Right ventricle myocardium inferior (tissue), 1 donor: ENCODE measurements at regions of chr10 and their contacts with region 1.

Region 1: DNA sequence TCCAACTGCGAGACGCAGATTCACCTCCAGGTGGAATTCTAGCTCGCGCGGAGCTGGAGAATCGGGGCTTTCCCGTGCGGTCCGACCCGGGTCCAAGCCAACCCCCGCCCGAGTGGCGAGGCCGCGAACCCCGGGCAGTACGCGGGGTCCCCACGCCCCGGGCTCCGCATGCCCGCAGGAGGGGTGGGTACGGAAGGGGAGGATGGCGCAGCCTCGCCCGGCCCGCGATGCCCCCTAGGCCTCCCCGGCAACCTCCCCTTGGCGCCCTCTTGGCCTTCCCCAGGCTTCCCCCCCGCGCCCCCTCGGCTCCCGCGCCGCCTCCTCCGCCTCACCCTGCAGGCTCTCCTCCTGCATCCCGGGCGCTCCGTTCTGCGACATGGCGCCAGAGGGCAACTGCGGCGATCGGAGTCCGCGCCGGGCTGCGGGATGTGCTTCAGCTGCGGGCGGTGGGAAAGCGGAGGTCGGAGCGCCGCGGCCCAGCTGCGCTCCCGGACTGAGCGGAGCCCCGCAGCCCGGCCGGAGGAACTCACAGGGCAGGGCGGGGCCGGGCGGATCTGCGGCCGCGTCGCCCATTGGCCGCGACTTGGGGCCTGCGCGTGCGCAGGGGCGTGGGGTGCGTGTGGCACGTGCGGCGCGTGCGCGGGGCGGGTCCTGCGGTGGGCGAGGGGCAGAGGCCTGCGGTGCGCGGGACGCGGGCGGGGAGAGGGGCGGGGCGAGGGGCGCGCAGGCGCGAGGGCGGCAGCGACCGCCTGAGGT is at the start of gene BNIP3:
- DNase-seq: peak; percentile 96
- ATAC-seq: peak; percentile 96
- total RNA-seq, gene BNIP3: 157 TPM

Region 2: DNA sequence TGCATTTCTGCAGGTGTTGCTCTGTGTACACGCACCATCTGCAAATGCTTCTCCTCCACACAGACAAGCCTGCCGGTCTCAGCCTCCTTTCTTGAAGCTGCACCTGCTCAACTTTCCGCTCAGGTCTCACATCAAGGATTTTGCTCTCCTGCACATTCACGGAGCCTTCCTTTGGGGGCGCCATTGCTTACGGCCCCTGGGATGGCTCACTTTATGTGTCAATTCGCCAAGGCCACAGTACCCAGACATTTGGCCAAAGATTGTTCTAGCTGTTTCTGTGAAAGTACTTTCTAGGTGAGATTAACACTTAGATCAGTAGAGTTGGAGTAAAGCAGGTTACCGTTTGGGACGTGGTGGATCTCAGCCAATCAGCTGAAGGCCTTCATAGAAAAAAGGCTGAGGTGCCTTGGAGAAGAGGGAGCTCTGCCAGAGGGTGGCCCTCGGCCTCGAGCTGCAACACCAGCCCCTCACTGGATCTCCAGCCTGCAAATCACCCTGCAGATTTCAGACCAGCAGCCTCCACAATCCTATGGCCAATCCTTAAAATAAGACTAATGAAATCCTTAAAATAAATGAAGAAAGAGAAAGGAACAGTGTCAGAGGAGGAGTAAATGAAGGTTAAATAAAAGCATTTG is 120.7 kb before region 1 on chr10:
- intact Hi-C with region 1: no loop called
- DNase-seq: no peak
- ATAC-seq: no peak

Region 3: GRCh38 chr10:131900350-131901146 is 81.1 kb before region 1 on chr10 and contains the start of gene PPP2R2D:
- intact Hi-C with region 1: loop called (anchors 5 kb)
- DNase-seq: peak; percentile 96
- ATAC-seq: peak; percentile 97
- total RNA-seq, gene PPP2R2D: 36.6 TPM

Region 4: DNA sequence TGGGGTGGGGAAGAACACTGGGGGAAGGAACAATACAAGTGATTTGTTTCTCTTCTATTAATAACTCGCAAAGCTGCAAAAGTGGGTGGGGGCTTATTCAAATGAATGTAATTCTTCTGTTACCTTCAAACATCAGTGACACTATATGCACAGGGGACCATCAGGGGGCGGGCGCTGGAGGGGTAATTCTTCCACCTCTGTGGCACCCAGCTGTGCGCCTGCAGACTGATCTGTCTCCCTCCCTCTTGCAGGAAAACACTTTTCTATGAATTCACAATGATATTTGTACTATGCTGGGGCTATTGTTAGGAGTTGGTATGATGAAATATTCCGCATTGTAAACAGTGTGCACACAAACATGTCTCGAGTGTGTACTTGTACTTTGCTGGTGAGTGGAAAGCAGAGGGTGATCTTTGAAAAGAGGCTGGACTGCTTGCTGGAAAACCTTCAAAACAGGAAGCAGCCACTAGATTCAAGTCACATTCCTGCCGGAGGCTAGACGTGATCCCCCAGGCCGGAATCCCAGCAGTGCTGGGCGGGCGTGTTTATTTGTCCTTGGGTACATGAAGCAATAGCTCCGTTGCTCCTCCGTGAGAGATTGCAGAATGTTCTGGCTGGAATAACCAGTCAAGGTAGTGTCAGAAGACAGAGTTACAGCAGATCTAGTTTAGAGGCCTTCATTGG is 15.9 kb after region 1 on chr10:
- intact Hi-C with region 1: loop called (anchors 1 kb)
- DNase-seq: no peak
- ATAC-seq: peak; percentile 71

Region 5: DNA sequence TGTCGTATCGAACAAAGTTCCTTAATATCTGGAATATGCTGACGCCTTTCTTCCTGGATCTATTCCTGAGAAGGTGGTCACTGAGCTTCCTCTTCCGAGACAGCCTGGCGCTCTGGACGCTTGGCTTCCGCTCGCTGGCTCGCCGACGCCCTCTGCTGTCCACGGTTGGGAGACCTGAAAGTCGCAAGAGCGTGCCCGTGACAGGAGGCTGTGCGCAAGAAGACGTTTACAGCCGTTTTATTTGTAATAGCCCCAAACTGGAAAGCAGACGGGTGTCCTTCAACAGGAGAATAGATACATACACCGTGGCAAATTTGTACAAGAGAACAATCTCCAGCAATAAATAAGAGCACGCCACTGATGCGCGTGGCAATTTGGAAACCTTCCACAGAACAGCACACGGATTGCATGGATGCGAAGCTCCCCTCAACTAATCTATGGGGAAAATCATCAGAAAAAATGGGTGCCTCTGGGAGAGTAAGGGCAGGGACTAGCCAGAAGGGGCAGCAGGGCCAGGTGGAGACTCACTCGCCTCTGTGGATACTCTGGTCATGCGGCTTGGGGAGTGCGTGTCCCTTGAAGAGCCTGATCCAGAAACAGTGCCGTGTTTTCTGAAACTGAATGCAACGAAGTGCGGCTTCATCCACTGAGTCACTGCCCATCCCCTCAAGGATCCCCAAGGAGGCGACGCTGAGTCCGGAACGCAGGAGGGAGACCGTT is 41.6 kb after region 1 on chr10:
- intact Hi-C with region 1: loop called (anchors 5 kb)
- DNase-seq: peak; percentile 88
- ATAC-seq: peak; percentile 88